Activated CD4-positive, alpha-beta T cell treated with anti-CD3 and anti-CD28 coated beads, Interleukin-2, amount 10 ng/mL, durations not matched to agents 24 days and 14 days (primary cell): ENCODE measurements at regions of chr17 and their contacts with region 1.

Region 1: GRCh38 chr17:38572669-38573365 is 32.9 kb downstream of the SRCIN1 start:
- DNase-seq: no peak
- H3K4me3 Mint-ChIP-seq: peak overlapping the region; percentile 24
- H3K27ac Mint-ChIP-seq: peak overlapping the region; percentile 7
- H3K4me1 Mint-ChIP-seq: peaks cover 2% of the 10 kb centered on the region
- H3K27me3 Mint-ChIP-seq: peaks cover 82% of the 10 kb centered on the region

Region 2: DNA sequence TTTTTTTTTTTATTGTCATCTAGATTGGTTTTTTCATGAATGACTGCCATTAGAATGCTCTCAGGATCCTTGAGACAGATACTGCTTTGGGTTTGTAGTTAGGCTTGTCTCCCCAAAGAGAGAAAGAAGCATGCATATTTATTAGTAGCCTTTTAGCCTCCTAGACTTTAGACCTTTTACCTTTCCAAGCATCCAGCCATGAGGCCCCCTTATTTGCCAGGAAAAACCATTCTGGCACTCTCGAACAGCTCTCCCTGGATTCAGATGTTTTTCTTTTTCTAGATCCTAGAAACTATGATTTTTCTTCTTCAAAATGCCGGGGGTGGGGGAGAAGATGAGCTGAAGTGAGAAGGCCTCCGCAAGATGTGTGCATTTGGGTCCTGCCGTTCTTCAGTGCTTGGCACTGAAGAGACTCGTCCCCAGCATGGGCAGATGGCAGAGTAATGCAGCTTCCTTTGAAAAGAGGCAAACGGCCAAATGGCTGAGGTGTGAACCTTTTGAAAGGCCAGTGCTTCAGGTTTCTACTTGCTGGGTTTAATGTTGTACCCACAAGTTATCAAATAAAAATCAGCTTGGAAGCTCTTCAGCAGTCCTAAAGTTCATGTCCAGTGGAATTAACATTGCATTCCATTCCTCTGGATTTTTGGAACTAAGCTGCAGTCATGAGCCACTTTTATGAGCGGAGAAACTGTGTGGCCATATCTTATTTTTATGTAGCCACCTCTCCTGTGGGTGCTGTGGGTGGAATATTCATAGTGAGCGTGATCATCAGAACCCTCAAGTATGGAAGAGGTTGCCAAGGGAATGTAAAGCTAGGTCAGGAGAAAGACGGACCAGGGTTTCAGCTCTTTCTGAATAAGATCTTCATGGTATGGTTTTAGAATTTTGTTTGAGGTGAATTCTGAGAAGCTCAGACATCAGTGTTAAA is 214.0 kb before region 1 on chr17:
- intact Hi-C with region 1: no loop called
- DNase-seq: no peak
- H3K4me3 Mint-ChIP-seq: no peak overlapping the region
- H3K27ac Mint-ChIP-seq: no peak overlapping the region
- H3K4me1 Mint-ChIP-seq: peaks cover 22% of the 10 kb centered on the region
- H3K27me3 Mint-ChIP-seq: no peaks in the 10 kb centered on the region

Region 3: DNA sequence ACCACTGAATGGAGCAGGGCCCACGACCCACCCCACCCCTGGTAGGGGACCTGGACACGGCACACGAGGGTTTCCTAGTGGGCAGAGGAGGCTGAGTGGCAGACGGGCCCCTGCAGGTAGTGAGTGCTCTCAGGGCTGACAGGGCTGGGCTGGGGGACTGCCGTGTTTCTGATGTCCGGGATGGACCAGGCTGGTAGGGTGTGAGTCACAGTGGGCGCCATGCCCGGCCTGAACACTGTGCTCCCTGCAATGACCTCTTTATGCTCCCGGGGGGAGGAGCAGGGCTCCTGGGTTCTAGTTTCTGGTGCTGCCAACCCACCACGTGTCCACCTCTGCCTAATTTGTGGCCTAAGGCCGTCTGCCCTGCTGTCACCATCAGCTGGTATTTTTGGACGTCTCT is 118.3 kb before region 1 on chr17:
- intact Hi-C with region 1: no loop called
- DNase-seq: no peak
- H3K4me3 Mint-ChIP-seq: no peak overlapping the region
- H3K27ac Mint-ChIP-seq: no peak overlapping the region
- H3K4me1 Mint-ChIP-seq: peaks cover 5% of the 10 kb centered on the region
- H3K27me3 Mint-ChIP-seq: peaks cover 46% of the 10 kb centered on the region

Region 4: GRCh38 chr17:38685491-38685890 is 112.7 kb after region 1 on chr17:
- intact Hi-C with region 1: no loop called
- DNase-seq: no peak
- H3K4me3 Mint-ChIP-seq: no peak overlapping the region
- H3K27ac Mint-ChIP-seq: no peak overlapping the region
- H3K4me1 Mint-ChIP-seq: peaks cover 3% of the 10 kb centered on the region
- H3K27me3 Mint-ChIP-seq: peaks cover 2% of the 10 kb centered on the region

Region 5: GRCh38 chr17:39599665-39600231 is 1026.9 kb after region 1 on chr17:
- intact Hi-C with region 1: loop called (anchors 5 kb)
- DNase-seq: no peak
- H3K4me3 Mint-ChIP-seq: no peak overlapping the region
- H3K27ac Mint-ChIP-seq: no peak overlapping the region
- H3K4me1 Mint-ChIP-seq: peaks cover 14% of the 10 kb centered on the region
- H3K27me3 Mint-ChIP-seq: peaks cover 80% of the 10 kb centered on the region